Dorsolateral prefrontal cortex (tissue), 120 donors: ENCODE measurements at regions of chr3 and their contacts with region 1.

Region 1: GRCh38 chr3:129947538-129948240 is 26.8 kb upstream of the TRH start:
- DNase-seq: no peak
- H3K4me3 ChIP-seq: no peak overlapping the region
- H3K27ac ChIP-seq: no peak overlapping the region
- H3K27me3 ChIP-seq: no peaks in the 10 kb centered on the region
- CTCF ChIP-seq: no peak

Region 2: GRCh38 chr3:129985113-129985512 is 37.4 kb after region 1 on chr3:
- intact Hi-C with region 1: loop called in 1 of 2 experiments (anchors 5 kb)
- DNase-seq: no peak
- H3K4me3 ChIP-seq: no peak overlapping the region
- H3K27ac ChIP-seq: no peak overlapping the region
- H3K27me3 ChIP-seq: peaks cover 0 to 10% (median 0%) of the 10 kb centered on the region in 45 donors
- CTCF ChIP-seq: no peak

Region 3: GRCh38 chr3:129994883-129995559 is 47.3 kb after region 1 on chr3:
- intact Hi-C with region 1: loop called in 1 of 2 experiments (anchors 5 kb)
- DNase-seq: peak in 5 of 10 donors; percentile 27 to 70 (median 51)
- H3K4me3 ChIP-seq: no peak overlapping the region
- H3K27ac ChIP-seq: no peak overlapping the region
- H3K27me3 ChIP-seq: peaks cover 0 to 4% (median 0%) of the 10 kb centered on the region in 45 donors
- CTCF ChIP-seq: no peak